Psoas muscle (tissue), 8 donors: ENCODE measurements at regions of chr10 and their contacts with region 1.

Region 1: DNA sequence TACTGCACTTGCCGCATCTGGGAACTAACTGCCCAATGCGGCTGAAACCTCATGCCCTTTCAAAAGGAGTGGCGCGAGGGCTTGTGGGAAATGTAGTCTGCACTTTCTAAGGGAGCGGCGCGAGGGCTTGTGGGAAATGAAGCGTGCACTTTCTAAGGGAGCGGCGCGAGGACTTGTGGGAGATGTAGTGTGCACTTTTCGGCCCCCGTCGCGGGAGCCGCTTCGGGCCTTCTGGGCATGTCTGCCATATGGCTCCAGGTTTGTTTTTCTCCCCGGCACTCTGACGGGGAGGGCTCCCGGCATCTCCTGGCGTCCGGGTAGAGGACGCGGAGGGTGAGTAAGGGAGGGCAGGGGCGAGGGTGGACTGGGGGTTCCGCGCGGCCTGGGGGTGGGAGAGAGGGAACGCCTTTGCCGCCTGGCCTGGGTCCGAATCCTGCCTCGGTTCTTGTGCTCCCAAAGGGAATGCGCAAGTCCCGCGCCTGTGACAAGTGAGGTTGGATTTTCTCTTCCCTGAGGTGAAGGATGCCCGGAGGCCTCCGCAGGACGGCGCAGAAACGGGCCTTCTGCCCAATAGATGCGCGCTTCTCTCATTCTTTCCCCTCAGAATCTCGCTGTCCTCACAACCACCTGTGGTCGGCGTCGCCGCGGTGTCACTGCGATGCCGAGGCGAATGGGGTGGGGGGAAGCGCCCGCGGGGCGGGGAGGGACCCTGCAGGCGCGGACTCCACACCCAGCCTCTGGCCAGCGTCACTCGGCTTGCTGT is at the start of gene ZNF37A:
- DNase-seq: peak; percentile 93 to 96
- ATAC-seq: peak; percentile 98 to 99 (median 99)
- H3K4me3 ChIP-seq: peak within 1 kb of the TSS; percentile 96
- H3K27ac ChIP-seq: peak within 1 kb of the TSS; percentile 90
- H3K4me1 ChIP-seq: peaks cover 4% of the 10 kb centered on the region
- H3K27me3 ChIP-seq: no peaks in the 10 kb centered on the region
- CTCF ChIP-seq: no peak
- total RNA-seq, gene ZNF37A: 6.9 to 9.8 (median 8.0) TPM

Region 2: GRCh38 chr10:37857287-37858211 is 236.8 kb before region 1 on chr10 and contains the start of gene ZNF248:
- intact Hi-C with region 1: loop called in 1 of 2 experiments (anchors 5 kb)
- DNase-seq: peak; percentile 97 to 98
- ATAC-seq: peak; percentile 98 to 100 (median 99)
- H3K4me3 ChIP-seq: peak within 1 kb of the TSS; percentile 93
- H3K27ac ChIP-seq: peak within 1 kb of the TSS; percentile 100
- H3K4me1 ChIP-seq: peaks cover 32% of the 10 kb centered on the region
- H3K27me3 ChIP-seq: no peaks in the 10 kb centered on the region
- CTCF ChIP-seq: no peak
- total RNA-seq, gene ZNF248: 4.5 to 12.6 (median 8.1) TPM

Region 3: GRCh38 chr10:37871568-37872251 is 222.6 kb before region 1 on chr10:
- intact Hi-C with region 1: no loop called
- DNase-seq: no peak
- ATAC-seq: no peak
- H3K4me3 ChIP-seq: no peak overlapping the region
- H3K27ac ChIP-seq: no peak overlapping the region
- H3K4me1 ChIP-seq: no peaks in the 10 kb centered on the region
- H3K27me3 ChIP-seq: no peaks in the 10 kb centered on the region
- CTCF ChIP-seq: no peak

Region 4: GRCh38 chr10:38010119-38010903 is 84.0 kb before region 1 on chr10 and contains the start of gene ZNF33A:
- intact Hi-C with region 1: loop called (anchors 5 to 10 kb)
- DNase-seq: peak; percentile 89 to 94
- ATAC-seq: peak; percentile 97 to 98 (median 97)
- H3K4me3 ChIP-seq: peak within 1 kb of the TSS; percentile 82
- H3K27ac ChIP-seq: peak within 1 kb of the TSS; percentile 97
- H3K4me1 ChIP-seq: peaks cover 8% of the 10 kb centered on the region
- H3K27me3 ChIP-seq: no peaks in the 10 kb centered on the region
- CTCF ChIP-seq: peak; percentile 27
- total RNA-seq, gene ZNF33A: 16.9 to 20.8 (median 18.8) TPM

Region 5: DNA sequence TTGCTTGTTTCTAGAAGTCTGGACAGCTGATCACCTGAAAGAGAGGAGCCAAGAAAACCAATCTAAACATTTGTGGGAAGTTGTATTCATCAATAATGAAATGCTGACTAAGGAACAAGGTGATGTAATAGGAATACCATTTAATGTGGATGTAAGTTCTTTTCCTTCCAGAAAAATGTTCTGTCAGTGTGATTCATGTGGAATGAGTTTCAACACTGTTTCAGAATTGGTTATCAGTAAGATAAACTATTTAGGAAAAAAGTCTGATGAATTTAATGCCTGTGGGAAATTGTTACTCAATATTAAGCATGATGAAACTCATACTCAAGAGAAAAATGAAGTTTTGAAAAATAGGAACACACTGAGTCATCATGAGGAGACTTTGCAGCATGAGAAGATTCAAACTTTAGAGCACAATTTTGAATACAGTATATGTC is 40.0 kb before region 1 on chr10:
- intact Hi-C with region 1: no loop called
- DNase-seq: no peak
- ATAC-seq: no peak
- H3K4me3 ChIP-seq: no peak overlapping the region
- H3K27ac ChIP-seq: no peak overlapping the region
- H3K4me1 ChIP-seq: no peaks in the 10 kb centered on the region
- H3K27me3 ChIP-seq: no peaks in the 10 kb centered on the region
- CTCF ChIP-seq: no peak